Kidney (tissue), 22 donors: ENCODE measurements at regions of chr1 and their contacts with region 1.

Region 1: DNA sequence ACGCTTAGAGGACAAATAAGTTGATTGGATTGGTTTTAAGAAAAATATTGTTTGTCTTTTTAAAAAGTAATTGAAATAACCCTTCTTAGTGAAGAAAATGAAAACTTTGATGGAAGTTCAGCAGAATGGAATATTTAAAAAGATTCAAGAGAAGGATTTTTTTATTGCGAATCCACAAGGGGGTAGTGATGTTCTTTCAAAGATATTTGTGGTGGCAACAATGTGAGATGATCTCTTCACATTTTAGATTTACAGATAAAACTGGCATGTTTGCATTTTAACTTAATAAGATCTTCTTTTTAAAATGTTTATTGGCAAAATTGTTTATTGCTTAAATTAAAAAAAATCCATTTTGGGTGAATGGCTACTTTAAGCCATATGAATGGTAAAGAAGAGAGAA is 8.9 kb downstream of the CAMTA1 start:
- DNase-seq: peak in 2 of 5 donors; percentile 55 to 64
- H3K4me3 ChIP-seq: no peak overlapping the region
- H3K27ac ChIP-seq: no peak overlapping the region
- H3K4me1 ChIP-seq: peaks cover 0 to 4% (median 2%) of the 10 kb centered on the region in 3 donors
- H3K27me3 ChIP-seq: no peaks in the 10 kb centered on the region
- CTCF ChIP-seq: peak; percentile 27

Region 2: DNA sequence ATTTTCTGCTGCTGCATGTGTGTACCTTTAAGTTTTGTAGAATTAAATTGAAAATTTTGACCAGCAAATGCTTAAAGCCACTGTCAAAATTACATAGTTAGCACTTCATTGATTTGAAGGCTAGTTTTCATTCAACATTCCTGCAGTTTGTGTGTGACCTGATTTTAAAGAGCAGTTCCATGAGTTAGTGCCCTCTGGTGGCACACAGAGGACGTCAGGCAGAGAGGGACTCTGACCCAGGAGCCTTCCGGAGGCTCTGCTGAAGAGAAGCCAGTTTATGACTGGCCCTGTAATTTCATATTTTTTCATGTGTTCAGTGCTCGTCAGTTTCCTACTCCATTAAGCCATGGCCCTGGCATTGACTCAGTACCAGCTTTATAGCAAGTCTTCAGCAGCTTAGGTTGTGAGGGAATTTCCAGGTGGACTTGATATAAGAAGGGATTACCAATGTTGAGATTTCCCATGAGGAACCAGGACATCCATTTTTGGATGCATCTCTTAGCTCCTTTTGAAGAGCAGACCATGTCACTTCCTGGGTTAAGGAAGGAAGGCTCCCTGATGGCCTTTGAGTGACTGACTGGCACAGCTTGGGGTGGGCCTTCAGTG is 95.8 kb after region 1 on chr1:
- intact Hi-C with region 1: loop called (anchors 10 kb)
- DNase-seq: peak in 2 of 5 donors; percentile 76 to 80
- H3K4me3 ChIP-seq: no peak overlapping the region
- H3K27ac ChIP-seq: no peak overlapping the region
- H3K4me1 ChIP-seq: peaks cover 0 to 2% (median 0%) of the 10 kb centered on the region in 3 donors
- H3K27me3 ChIP-seq: no peaks in the 10 kb centered on the region
- CTCF ChIP-seq: peak; percentile 80

Region 3: GRCh38 chr1:7069931-7070330 is 275.8 kb after region 1 on chr1:
- intact Hi-C with region 1: loop called (anchors 10 kb)
- DNase-seq: peak in 4 of 5 donors; percentile 51 to 65 (median 63)
- H3K4me3 ChIP-seq: peak overlapping the region; percentile 52 to 70 (median 55)
- H3K27ac ChIP-seq: no peak overlapping the region
- H3K4me1 ChIP-seq: peaks cover 0 to 3% (median 0%) of the 10 kb centered on the region in 3 donors
- H3K27me3 ChIP-seq: no peaks in the 10 kb centered on the region
- CTCF ChIP-seq: no peak